CD4-positive, alpha-beta memory T cell (primary cell): ENCODE measurements at regions of chr12 and their contacts with region 1.

Region 1: GRCh38 chr12:120955232-120955631 is 23.1 kb upstream of the HNF1A start:
- DNase-seq: no peak
- H3K4me3 ChIP-seq: no peak overlapping the region
- H3K4me3 Mint-ChIP-seq: no peak overlapping the region
- H3K27ac ChIP-seq: no peak overlapping the region
- H3K27ac Mint-ChIP-seq: no peak overlapping the region
- H3K4me1 ChIP-seq: peaks cover 13% of the 10 kb centered on the region
- H3K4me1 Mint-ChIP-seq: peaks cover 6 to 14% (median 10%) of the 10 kb centered on the region in 4 donors
- H3K27me3 ChIP-seq: no peaks in the 10 kb centered on the region
- H3K27me3 Mint-ChIP-seq: peaks cover 0 to 2% of the 10 kb centered on the region in 2 donors

Region 2: DNA sequence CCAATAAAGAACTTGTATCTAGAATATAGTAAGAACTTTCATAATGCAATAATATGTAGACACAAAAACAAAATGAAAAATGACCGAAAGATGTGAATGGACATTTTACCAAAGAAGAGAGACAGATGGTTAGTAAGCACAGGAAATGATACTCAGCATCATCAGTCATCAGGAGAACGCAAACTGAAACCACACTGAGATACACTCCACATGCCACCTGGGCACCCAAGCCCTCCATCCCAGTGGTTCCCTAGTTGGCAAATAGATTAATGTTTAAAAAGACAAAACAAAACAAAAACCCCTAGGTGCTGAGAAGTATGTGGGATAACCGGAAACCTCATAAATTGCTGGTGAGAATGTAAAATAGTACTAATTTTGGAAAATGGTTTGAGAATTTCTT is 1337.8 kb after region 1 on chr12:
- CTCF ChIA-PET with region 1: no interaction called
- POLR2A ChIA-PET with region 1: no interaction called
- intact Hi-C with region 1: loop called (anchors 10 kb)
- DNase-seq: no peak
- H3K4me3 ChIP-seq: no peak overlapping the region
- H3K4me3 Mint-ChIP-seq: no peak overlapping the region
- H3K27ac ChIP-seq: no peak overlapping the region
- H3K27ac Mint-ChIP-seq: peak overlapping the region in 1 of 7 donors; percentile 68
- H3K4me1 ChIP-seq: no peaks in the 10 kb centered on the region
- H3K4me1 Mint-ChIP-seq: peaks cover 0 to 2% (median under 1%) of the 10 kb centered on the region in 4 donors
- H3K27me3 ChIP-seq: no peaks in the 10 kb centered on the region
- H3K27me3 Mint-ChIP-seq: no peaks in the 10 kb centered on the region